HAP-1 (cell line): ENCODE measurements at regions of chr14 and their contacts with region 1.

Region 1: DNA sequence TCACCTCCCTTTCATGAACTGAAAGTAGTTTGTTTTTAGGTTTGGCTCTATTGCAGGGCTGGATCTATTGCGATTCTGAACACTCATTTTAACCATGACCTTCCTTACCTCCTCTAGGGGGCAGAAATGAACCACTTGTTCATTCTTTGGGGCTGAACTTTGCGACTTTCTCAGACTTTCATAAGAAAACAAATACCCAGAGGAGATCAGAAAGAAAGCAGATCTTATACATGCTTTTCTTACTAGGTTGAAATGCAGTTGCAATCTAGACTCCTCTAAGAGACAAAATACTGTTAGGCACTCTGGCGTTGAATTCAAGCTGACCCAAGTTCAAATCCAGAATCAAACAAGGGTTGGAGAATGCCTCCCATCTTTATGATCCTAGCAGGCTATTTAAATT is 32.6 kb upstream of the PLEKHG3 start:
- DNase-seq: peak in 1 of 2 experiments; percentile 74
- H3K4me3 ChIP-seq: no peak overlapping the region
- H3K4me1 ChIP-seq: no peaks in the 10 kb centered on the region
- H3K27me3 ChIP-seq: no peaks in the 10 kb centered on the region

Region 2: DNA sequence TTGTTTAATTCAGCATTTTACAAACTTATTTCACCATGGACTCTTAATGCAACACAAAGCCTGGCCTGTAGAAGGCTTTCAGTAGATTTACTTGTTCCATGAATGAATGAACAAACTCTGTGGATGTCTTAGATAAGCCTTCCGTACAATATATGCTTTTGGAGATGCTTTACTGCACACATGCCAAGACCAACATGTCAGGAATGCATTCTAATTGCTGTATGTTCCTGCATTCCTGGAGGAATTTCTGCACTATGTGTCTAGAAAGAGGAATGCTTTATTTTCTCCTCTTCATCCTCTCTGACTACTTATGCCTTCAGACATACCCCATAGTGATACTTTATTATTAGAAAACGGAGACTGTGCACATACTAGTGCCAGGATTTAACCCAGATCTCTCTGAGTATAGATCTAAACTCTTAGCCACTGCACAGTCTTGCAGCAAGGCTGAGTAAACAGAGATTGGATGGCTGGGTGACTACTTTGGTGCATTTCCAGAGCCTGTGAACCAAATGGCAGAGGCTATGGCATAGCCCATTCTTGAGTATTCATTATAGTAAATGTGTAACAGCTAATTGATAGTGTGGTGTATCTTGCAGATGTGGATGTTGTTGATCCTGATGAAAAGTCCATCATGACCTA is 710.5 kb before region 1 on chr14:
- in situ Hi-C with region 1: no loop called
- DNase-seq: no peak
- H3K4me3 ChIP-seq: no peak overlapping the region
- H3K4me1 ChIP-seq: no peaks in the 10 kb centered on the region
- H3K27me3 ChIP-seq: no peaks in the 10 kb centered on the region

Region 3: DNA sequence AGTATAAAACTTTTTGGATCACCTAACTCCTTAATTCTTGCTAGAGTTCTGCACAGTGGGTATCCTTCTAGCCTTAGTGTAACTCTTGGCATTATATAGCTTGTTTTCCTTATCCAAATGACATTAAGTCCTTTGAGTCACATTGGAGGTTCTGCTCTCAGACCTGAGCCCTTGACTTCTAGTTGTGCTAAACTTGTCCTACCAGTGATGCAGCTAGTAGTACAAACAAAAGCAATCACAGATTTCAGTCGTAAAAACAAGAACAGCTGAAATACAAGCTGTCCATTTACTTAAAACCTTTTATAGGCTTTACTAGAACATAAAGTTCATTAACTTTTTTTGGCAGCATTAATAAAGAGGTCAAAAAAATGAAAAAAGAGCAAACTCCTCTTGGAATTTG is 156.5 kb before region 1 on chr14:
- in situ Hi-C with region 1: no loop called
- DNase-seq: no peak
- H3K4me3 ChIP-seq: no peak overlapping the region
- H3K4me1 ChIP-seq: peaks cover 18% of the 10 kb centered on the region
- H3K27me3 ChIP-seq: no peaks in the 10 kb centered on the region

Region 4: DNA sequence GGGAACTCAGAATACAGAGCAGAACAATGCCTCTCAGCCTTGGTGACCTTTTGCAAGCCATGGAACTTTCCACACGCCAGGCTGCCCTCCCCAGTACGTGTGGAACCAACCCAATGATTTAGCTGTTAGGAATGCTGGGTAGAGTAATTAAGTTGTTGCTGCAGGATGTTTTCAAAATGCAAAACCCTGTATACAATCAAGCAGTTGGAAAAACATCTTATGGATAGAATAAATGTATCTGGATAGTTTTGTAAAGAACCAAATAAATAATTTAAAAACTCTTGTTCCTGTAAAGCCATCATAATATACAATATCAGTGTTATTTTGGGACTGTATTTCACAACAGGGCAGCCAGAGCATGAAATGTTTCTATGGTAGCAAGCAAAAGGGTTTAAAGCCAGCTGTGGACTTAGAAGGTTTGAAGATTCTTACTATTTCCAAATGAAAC is 102.4 kb before region 1 on chr14:
- in situ Hi-C with region 1: no loop called
- DNase-seq: no peak
- H3K4me3 ChIP-seq: no peak overlapping the region
- H3K4me1 ChIP-seq: peaks cover 11% of the 10 kb centered on the region
- H3K27me3 ChIP-seq: no peaks in the 10 kb centered on the region

Region 5: DNA sequence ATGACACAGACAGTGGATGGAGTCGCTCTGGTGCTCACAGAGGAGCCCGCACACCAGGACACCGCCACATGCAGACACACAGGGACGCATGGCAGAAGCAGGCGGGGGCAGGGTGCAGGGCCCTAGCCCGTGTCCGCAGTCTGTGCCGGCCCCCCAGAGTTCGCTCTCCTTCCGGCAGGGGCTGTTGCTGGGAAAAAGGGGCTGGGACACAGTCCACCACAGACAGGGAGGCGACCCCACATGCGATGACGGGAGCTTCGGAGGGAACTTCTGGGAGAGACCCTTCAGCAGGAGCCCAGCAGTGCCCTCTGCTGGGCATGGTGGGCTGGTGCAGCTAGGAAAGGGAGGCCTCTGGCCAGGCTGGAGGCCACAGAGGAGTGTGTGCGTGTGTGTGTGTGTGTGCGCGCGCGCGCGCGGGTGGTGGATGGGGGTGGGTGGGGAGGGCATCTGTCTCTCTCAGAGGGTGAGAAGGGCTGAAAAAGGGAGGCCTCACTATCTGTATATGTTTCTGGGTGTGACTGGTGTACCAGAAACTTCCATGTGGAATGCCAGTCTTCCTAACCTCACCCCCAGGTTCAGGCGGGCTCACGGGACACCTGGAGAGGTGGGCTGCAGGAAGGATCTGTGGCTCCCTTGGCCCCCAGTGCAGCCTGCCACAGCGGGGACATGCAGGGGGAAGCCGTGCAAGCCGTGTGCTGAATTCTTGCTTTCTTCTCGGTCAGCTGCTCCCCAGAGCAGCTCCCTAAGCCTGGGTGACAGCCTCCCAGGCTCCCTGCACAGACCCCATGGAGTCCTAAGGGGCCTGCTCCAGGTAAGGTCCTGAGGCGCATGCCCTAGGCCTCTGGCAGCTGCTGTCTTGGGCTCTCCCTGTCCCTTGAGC is 93.3 kb after region 1 on chr14:
- in situ Hi-C with region 1: loop called (anchors 5 kb)
- DNase-seq: peak; percentile 70 to 86
- H3K4me3 ChIP-seq: no peak overlapping the region
- H3K4me1 ChIP-seq: peaks cover 7% of the 10 kb centered on the region; the same call in 1 of the 2 replicates
- H3K27me3 ChIP-seq: no peaks in the 10 kb centered on the region